ENCODE measurements at regions of chr20 and their contacts with region 1.

Region 1: GRCh38 chr20:46689082-46689754 is at the start of gene TP53RK:
- DNase-seq: peak; percentile 100
- H3K4me3 ChIP-seq: peak within 1 kb of the TSS; percentile 80 to 91 (median 86)
- H3K27ac ChIP-seq: peak within 1 kb of the TSS; percentile 94 to 99 (median 96)
- H3K4me1 ChIP-seq: peaks cover 0 to 42% (median 29%) of the 10 kb centered on the region in 4 donors
- H3K27me3 ChIP-seq: no peaks in the 10 kb centered on the region
- CTCF ChIP-seq: peak; percentile 37 to 57 (median 50)
- EP300 ChIP-seq: no peak
- POLR2A ChIP-seq: peak; percentile 65 to 70
- total RNA-seq, gene TP53RK: 9.1 to 24.4 (median 18.9) TPM

Region 2: GRCh38 chr20:46709459-46710152 is 20.4 kb after region 1 on chr20 and contains the start of gene SLC2A10:
- intact Hi-C with region 1: loop called (anchors 1 kb)
- DNase-seq: peak; percentile 85
- H3K4me3 ChIP-seq: peak within 1 kb of the TSS; percentile 64 to 84 (median 72)
- H3K27ac ChIP-seq: peak within 1 kb of the TSS; percentile 80 to 83 (median 80)
- H3K4me1 ChIP-seq: peaks cover 0 to 26% (median 10%) of the 10 kb centered on the region in 4 donors
- H3K27me3 ChIP-seq: no peaks in the 10 kb centered on the region
- CTCF ChIP-seq: no peak
- EP300 ChIP-seq: no peak
- POLR2A ChIP-seq: no peak
- total RNA-seq, gene SLC2A10: 6.4 to 18.8 (median 8.8) TPM

Measured in sigmoid colon (tissue), 7 donors.